Panc1 (cell line): ENCODE measurements at regions of chr12 and their contacts with region 1.

Region 1: DNA sequence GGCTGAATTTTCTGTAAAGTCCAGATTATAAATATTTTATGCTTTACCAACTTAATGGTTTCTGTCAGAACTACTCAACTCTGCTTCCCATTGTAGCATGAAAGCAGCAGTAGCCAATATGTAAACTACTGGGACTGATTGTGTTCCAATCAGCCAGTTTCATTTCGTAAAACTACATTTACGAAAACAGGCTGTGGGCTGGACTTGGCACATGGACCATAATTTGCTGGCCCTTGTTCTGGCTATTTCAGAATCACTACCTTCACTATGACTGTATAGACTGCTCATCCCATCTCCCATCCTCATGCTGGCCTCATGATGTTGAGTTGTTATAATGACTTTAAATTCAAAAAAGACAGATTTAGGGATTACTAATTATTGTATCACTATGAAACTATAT is 38.7 kb downstream of the FAR2 start:
- DNase-seq: no peak
- ATAC-seq: no peak
- H3K4me3 ChIP-seq: no peak overlapping the region
- H3K27ac ChIP-seq: no peak overlapping the region
- H3K4me1 ChIP-seq: no peaks in the 10 kb centered on the region
- H3K27me3 ChIP-seq: no peaks in the 10 kb centered on the region
- CTCF ChIP-seq: no peak

Region 2: DNA sequence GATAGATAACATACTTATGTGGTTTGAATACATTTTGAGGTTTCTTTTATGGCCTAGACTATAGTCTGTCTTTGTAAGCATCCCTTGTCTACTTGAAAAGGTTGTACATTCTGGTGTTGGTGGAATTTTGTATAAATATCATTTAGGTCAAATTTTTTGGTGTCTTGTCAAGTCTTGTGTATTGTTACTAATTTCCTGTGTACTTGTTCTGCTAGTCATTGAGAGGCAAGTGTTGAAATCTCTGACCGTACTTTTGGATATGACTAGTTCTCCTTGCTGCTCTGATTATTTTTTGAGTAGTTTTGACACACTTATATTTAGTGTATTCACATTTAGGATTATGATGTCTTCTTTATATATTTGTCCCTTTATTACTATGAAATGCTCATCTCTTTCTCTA is 777.9 kb before region 1 on chr12:
- CTCF ChIA-PET with region 1: no interaction called
- POLR2A ChIA-PET with region 1: no interaction called
- in situ Hi-C with region 1: no loop called
- intact Hi-C with region 1: no loop called
- DNase-seq: no peak
- ATAC-seq: no peak
- H3K4me3 ChIP-seq: no peak overlapping the region
- H3K27ac ChIP-seq: no peak overlapping the region
- H3K4me1 ChIP-seq: no peaks in the 10 kb centered on the region
- H3K27me3 ChIP-seq: no peaks in the 10 kb centered on the region
- CTCF ChIP-seq: no peak

Region 3: DNA sequence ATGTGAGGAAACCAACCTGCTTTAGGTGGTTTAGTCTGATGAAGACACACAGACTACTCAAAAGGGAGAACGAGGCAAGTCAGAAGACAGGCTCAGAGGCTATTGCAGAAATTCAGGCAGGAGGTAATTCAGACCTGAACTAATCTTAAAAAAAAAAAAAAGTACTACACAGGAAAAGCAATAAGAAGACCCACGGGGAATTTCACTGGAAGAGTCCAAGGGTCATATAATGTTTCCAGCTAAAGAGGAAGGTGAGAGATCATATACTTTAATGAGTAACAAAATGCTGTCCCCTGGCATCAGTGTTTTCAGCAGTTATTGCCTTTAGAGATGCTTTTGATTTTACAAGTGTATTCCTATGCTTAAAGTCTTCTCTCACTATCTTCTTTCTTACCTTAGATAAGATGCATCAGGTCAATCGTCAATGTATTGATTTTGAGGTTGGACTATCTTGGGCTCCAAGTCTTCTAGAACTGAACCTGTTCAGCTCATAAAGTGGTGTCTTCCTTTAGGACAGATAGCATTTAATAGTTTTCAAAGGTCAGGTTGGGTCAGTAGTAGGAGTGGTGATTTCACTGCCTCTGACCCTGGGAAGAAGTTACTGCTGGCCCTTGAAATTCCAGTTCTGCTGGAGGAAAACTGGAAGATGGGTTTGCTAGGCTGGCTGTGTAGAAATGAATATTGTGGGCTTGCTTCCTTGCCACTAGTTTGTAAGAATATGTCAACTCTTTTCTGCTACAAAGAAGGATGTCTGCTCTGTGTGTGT is 21.4 kb after region 1 on chr12:
- CTCF ChIA-PET with region 1: no interaction called
- POLR2A ChIA-PET with region 1: interaction called, 20 read pairs
- in situ Hi-C with region 1: no loop called
- intact Hi-C with region 1: no loop called
- DNase-seq: no peak
- ATAC-seq: no peak
- H3K4me3 ChIP-seq: no peak overlapping the region
- H3K27ac ChIP-seq: no peak overlapping the region
- H3K4me1 ChIP-seq: no peaks in the 10 kb centered on the region
- H3K27me3 ChIP-seq: no peaks in the 10 kb centered on the region
- CTCF ChIP-seq: no peak